Mammary epithelial cell (primary cell): ENCODE measurements at regions of chr18 and their contacts with region 1.

Region 1: GRCh38 chr18:616380-616995 is 19.7 kb downstream of the CLUL1 start:
- DNase-seq: peak; percentile 20
- H3K4me3 ChIP-seq: no peak overlapping the region
- H3K27ac ChIP-seq: no peak overlapping the region
- H3K4me1 ChIP-seq: no peaks in the 10 kb centered on the region
- H3K27me3 ChIP-seq: no peaks in the 10 kb centered on the region
- CTCF ChIP-seq: peak; percentile 61 to 67

Region 2: GRCh38 chr18:228586-228985 is 387.9 kb before region 1 on chr18:
- CTCF ChIA-PET with region 1: no interaction called
- dilution Hi-C with region 1: no loop called
- in situ Hi-C with region 1: no loop called
- intact Hi-C with region 1: no loop called
- DNase-seq: no peak
- H3K4me3 ChIP-seq: no peak overlapping the region
- H3K27ac ChIP-seq: no peak overlapping the region
- H3K4me1 ChIP-seq: no peaks in the 10 kb centered on the region
- H3K27me3 ChIP-seq: no peaks in the 10 kb centered on the region
- CTCF ChIP-seq: no peak

Region 3: GRCh38 chr18:286515-287310 is 329.8 kb before region 1 on chr18:
- CTCF ChIA-PET with region 1: no interaction called
- dilution Hi-C with region 1: no loop called
- in situ Hi-C with region 1: loop called (anchors 10 kb)
- intact Hi-C with region 1: loop called (anchors 1 kb)
- DNase-seq: no peak
- H3K4me3 ChIP-seq: no peak overlapping the region
- H3K27ac ChIP-seq: no peak overlapping the region
- H3K4me1 ChIP-seq: no peaks in the 10 kb centered on the region
- H3K27me3 ChIP-seq: peaks cover 2% of the 10 kb centered on the region
- CTCF ChIP-seq: peak; percentile 20 to 49

Region 4: GRCh38 chr18:499551-500408 is 116.7 kb before region 1 on chr18:
- CTCF ChIA-PET with region 1: no interaction called
- dilution Hi-C with region 1: no loop called
- in situ Hi-C with region 1: no loop called
- intact Hi-C with region 1: loop called (anchors 5 kb)
- DNase-seq: peak; percentile 27
- H3K4me3 ChIP-seq: no peak overlapping the region
- H3K27ac ChIP-seq: no peak overlapping the region
- H3K4me1 ChIP-seq: no peaks in the 10 kb centered on the region
- H3K27me3 ChIP-seq: peaks cover 25% of the 10 kb centered on the region
- CTCF ChIP-seq: no peak

Region 5: DNA sequence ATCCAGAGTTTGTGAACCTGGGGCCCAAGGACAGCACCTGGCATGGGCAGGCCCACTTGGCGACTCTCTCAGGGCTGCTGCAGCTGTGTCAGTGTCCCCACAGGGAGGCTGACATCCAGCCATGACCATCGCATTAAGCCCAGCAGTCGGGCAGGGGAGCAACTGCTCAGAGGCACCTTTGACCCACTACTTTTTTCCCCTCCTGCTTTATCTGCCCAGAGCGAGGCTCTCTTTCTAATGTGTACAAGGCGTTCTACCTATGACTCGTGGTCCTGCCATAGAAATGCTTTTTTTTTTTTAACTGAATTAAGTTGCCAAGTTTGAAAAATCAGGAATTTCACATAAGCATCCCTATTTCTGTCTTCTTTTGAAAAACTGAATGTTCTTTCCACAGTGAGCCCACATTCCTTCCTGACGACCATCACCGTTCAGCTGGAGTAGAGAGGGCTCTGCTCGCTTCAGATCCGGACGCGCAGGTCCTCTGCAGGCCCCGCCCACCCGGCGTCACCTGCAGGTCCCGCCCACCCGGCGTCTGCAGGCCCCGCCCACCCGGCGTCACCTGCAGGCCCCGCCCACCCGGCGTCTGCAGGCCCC is 20.1 kb before region 1 on chr18:
- CTCF ChIA-PET with region 1: no interaction called
- dilution Hi-C with region 1: no loop called
- in situ Hi-C with region 1: no loop called
- intact Hi-C with region 1: loop called (anchors 1 kb)
- DNase-seq: peak; percentile 41
- H3K4me3 ChIP-seq: peak overlapping the region; percentile 6 to 34 (median 31)
- H3K27ac ChIP-seq: no peak overlapping the region
- H3K4me1 ChIP-seq: peaks cover 4% of the 10 kb centered on the region
- H3K27me3 ChIP-seq: no peaks in the 10 kb centered on the region
- CTCF ChIP-seq: no peak